Mammary epithelial cell (primary cell): ENCODE measurements at regions of chr16 and their contacts with region 1.

Region 1: GRCh38 chr16:17578921-17579874 is 108.4 kb upstream of the XYLT1 start:
- DNase-seq: peak; percentile 60
- H3K4me3 ChIP-seq: no peak overlapping the region
- H3K27ac ChIP-seq: no peak overlapping the region
- H3K4me1 ChIP-seq: peaks cover 9% of the 10 kb centered on the region
- H3K27me3 ChIP-seq: no peaks in the 10 kb centered on the region
- CTCF ChIP-seq: peak; percentile 94 to 96

Region 2: GRCh38 chr16:17538927-17539326 is 40.3 kb before region 1 on chr16:
- CTCF ChIA-PET with region 1: no interaction called
- dilution Hi-C with region 1: loop called (anchors 5 kb)
- in situ Hi-C with region 1: no loop called
- intact Hi-C with region 1: no loop called
- DNase-seq: no peak
- H3K4me3 ChIP-seq: no peak overlapping the region
- H3K27ac ChIP-seq: no peak overlapping the region
- H3K4me1 ChIP-seq: no peaks in the 10 kb centered on the region
- H3K27me3 ChIP-seq: no peaks in the 10 kb centered on the region
- CTCF ChIP-seq: no peak